PC-3 (cell line): ENCODE measurements at regions of chr4 and their contacts with region 1.

Region 1: GRCh38 chr4:89164400-89164799 is 53.1 kb downstream of the TIGD2 start:
- DNase-seq: peak; percentile 20
- ATAC-seq: no peak
- H3K4me3 ChIP-seq: no peak overlapping the region
- H3K27ac ChIP-seq: no peak overlapping the region
- H3K4me1 ChIP-seq: no peaks in the 10 kb centered on the region
- H3K27me3 ChIP-seq: peaks cover 21% of the 10 kb centered on the region
- CTCF ChIP-seq: peak; percentile 38; the same call in 1 of the 2 replicates

Region 2: DNA sequence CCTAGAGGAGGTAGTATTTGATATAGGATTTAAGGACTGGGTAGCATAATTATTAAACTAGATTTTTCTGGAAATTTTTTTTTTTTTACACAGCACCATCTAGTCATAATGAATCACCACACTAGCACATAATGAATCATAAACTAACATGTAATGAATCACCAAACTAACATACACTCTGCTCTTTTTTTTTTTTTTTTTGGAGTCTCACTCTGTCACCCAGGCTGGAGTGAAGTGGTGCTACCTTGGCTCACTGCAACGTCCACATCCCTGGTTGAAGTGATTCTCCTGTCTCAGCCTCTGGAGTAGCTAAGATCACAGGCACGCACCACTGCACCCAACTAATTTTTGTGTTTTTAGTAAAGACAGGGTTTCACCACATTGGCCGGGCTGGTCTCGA is 199.9 kb before region 1 on chr4:
- CTCF ChIA-PET with region 1: no interaction called
- POLR2A ChIA-PET with region 1: no interaction called
- intact Hi-C with region 1: no loop called
- DNase-seq: peak; percentile 55
- ATAC-seq: peak; percentile 68
- H3K4me3 ChIP-seq: no peak overlapping the region
- H3K27ac ChIP-seq: peak overlapping the region; percentile 90
- H3K4me1 ChIP-seq: peaks cover 49% of the 10 kb centered on the region
- H3K27me3 ChIP-seq: no peaks in the 10 kb centered on the region
- CTCF ChIP-seq: no peak

Region 3: GRCh38 chr4:89226665-89227574 is 62.5 kb after region 1 on chr4:
- CTCF ChIA-PET with region 1: no interaction called
- POLR2A ChIA-PET with region 1: no interaction called
- intact Hi-C with region 1: loop called (anchors 10 kb)
- DNase-seq: peak; percentile 79
- ATAC-seq: peak; percentile 95
- H3K4me3 ChIP-seq: no peak overlapping the region
- H3K27ac ChIP-seq: no peak overlapping the region
- H3K4me1 ChIP-seq: 0 out of 2 replicates have a peak, but pooled peaks cover 3% of the 10 kb centered on the region
- H3K27me3 ChIP-seq: no peaks in the 10 kb centered on the region
- CTCF ChIP-seq: peak; percentile 74